ENCODE measurements at regions of chrX and their contacts with region 1.

Region 1: DNA sequence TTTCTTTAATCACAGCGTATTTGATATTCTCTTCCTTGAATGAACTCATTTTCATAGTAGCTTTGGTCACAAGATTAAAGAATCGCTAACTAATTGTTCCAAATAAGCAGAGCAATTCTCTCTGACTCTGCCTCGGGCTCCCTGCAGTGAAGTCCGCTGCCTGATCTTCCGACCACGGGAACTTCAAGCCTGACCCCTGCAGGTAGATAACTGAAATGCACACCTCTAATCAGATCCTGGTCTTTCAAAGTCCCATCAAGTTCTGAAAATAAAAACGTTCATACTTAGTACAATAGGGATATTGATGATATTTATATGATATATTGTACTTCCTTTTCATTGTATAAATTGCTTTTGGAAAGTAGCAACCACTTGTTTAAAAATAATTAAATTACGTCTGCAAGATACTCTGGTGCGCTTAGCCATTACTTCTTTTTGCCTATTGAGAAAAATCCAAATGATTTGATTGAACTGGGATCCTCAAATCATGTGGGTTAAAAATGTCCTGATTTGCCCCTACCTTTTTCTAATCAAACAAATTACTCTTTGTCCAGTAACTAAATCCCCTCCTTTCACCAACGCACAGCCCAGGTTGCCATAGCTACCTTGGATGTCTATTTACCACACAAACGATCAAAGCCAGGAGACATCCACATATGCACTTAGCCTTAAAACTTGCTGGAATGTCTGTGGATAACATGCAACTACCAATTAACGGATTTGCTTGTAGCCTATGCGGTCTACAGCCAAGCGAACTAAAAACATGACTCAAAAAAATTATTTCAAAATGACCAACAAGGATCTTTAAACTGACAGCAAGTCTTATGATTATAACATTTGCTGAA is 4.2 kb downstream of the MID1 start:
- DNase-seq: peak; percentile 56
- ATAC-seq: peak; percentile 58
- H3K4me3 ChIP-seq: no peak overlapping the region
- H3K4me3 Mint-ChIP-seq: no peak overlapping the region
- H3K27ac ChIP-seq: no peak overlapping the region
- H3K27ac Mint-ChIP-seq: no peak overlapping the region
- H3K4me1 ChIP-seq: peaks cover 7 to 19% of the 10 kb centered on the region in 2 donors
- H3K4me1 Mint-ChIP-seq: peaks cover 12% of the 10 kb centered on the region
- H3K27me3 ChIP-seq: peaks cover 0 to 31% (median 24%) of the 10 kb centered on the region in 4 experiments
- H3K27me3 Mint-ChIP-seq: peaks cover 24% of the 10 kb centered on the region
- CTCF ChIP-seq: peak; percentile 73

Region 2: GRCh38 chrX:9966775-9967408 is 649.3 kb before region 1 on chrX and contains the start of gene CLDN34:
- CTCF ChIA-PET with region 1: no interaction called
- POLR2A ChIA-PET with region 1: no interaction called
- intact Hi-C with region 1: no loop called
- DNase-seq: no peak
- ATAC-seq: no peak
- H3K4me3 ChIP-seq: no peak within 1 kb of the TSS
- H3K4me3 Mint-ChIP-seq: no peak within 1 kb of the TSS
- H3K27ac ChIP-seq: no peak within 1 kb of the TSS
- H3K27ac Mint-ChIP-seq: no peak within 1 kb of the TSS
- H3K4me1 ChIP-seq: no peaks in the 10 kb centered on the region
- H3K4me1 Mint-ChIP-seq: no peaks in the 10 kb centered on the region
- H3K27me3 ChIP-seq: no peaks in the 10 kb centered on the region
- H3K27me3 Mint-ChIP-seq: peaks cover 5% of the 10 kb centered on the region
- CTCF ChIP-seq: no peak
- total RNA-seq, gene CLDN34: not detected in 2 replicates

Region 3: GRCh38 chrX:10722851-10723250 is 106.7 kb after region 1 on chrX:
- CTCF ChIA-PET with region 1: no interaction called
- POLR2A ChIA-PET with region 1: no interaction called
- intact Hi-C with region 1: loop called (anchors 10 kb)
- DNase-seq: peak; percentile 54
- ATAC-seq: peak; percentile 62
- H3K4me3 ChIP-seq: no peak overlapping the region
- H3K4me3 Mint-ChIP-seq: no peak overlapping the region
- H3K27ac ChIP-seq: no peak overlapping the region
- H3K27ac Mint-ChIP-seq: no peak overlapping the region
- H3K4me1 ChIP-seq: no peaks in the 10 kb centered on the region
- H3K4me1 Mint-ChIP-seq: no peaks in the 10 kb centered on the region
- H3K27me3 ChIP-seq: peaks cover 0 to 3% (median 0%) of the 10 kb centered on the region in 4 experiments
- H3K27me3 Mint-ChIP-seq: no peaks in the 10 kb centered on the region
- CTCF ChIP-seq: peak; percentile 64

Measured in B cell (primary cell).